ENCODE measurements at regions of chr18 and their contacts with region 1.

Region 1: DNA sequence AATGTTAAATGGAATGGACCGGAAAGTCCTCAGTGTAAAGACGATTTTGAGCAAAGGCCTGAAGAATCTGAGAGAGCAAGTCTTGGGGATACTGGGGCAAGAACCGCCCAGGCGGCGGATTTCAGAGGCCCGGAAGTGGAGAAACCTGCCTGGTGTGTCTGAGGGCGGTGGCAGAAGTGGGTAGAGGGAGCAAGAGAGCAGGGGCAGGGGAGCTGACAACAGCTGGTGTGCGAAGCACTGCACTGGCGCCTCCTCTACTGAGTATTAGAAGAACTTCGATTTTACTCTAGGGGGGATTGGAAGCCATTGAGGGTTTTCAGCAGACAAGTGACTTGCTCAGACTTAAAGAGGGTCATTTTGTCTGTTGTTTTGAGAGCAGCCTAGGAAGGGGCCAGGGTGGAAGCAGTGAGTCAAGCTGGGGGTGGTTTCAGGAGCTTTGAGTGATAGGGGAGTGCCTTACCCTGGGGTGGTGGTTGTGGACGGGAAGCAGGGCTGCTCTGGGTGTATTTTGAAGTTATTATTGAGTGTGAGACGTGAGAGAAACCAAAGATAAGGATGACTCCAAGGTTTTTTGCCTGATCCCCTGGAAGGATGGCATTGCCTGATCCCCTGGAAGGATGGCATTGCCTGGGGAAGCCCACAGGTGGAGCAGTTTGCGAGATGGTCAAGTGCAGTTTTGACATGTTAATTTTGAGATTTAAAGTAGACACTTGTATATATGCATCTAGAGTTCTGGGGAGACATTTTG is 52.5 kb downstream of the ZNF236 start:
- DNase-seq: no peak

Region 2: GRCh38 chr18:76803814-76804213 is 71.0 kb before region 1 on chr18:
- intact Hi-C with region 1: loop called (anchors 5 kb)
- DNase-seq: no peak

Measured in cardiac septum (tissue), 1 donor.